SK-N-SH (cell line): ENCODE measurements at regions of chr6 and their contacts with region 1.

Region 1: DNA sequence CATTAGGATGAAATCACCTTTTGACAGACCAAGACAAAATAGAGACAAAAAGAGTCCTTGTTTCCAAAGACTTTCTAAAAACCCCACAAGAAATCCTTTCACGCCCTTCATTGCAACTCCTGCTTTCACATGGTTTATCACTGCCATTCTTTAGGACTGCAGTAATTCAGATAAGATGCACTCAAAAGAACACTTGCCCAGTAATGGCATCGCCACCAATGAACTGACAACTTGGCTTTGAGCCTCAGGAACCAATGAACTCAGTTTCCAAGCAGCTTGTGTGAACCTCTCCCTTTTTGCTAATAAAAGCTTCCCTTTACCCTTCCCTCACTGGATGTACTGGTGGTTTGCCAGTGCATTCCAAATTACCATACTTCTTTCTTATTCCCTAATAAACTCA is 21.8 kb downstream of the OSTM1 start:
- DNase-seq: no peak
- H3K4me3 ChIP-seq: no peak overlapping the region
- H3K27ac ChIP-seq: no peak overlapping the region
- H3K4me1 ChIP-seq: no peaks in the 10 kb centered on the region
- H3K27me3 ChIP-seq: no peaks in the 10 kb centered on the region
- CTCF ChIP-seq: no peak
- EP300 ChIP-seq: no peak
- RAD21 ChIP-seq: no peak

Region 2: DNA sequence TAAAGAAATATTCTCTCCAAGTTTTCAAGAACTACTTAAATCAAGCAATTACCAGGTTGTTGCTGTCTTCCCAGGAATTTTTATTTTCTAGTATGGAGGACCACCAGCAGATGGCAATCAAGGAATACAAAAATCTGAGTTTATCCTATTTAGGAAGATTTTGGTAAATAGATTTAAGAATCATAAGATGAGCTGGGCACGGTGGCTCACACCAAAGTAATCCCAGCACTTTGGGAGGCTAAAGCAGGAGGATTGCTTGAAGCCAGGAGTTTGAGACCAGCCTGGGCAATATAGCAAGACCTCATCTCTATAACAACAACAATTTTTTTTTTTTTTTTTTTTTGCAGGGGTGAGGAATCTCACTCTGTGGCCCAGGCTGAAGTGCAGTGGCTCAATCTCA is 75.4 kb before region 1 on chr6:
- CTCF ChIA-PET with region 1: interaction called, 111 read pairs
- POLR2A ChIA-PET with region 1: no interaction called
- DNase-seq: peak; percentile 42
- H3K4me3 ChIP-seq: no peak overlapping the region
- H3K27ac ChIP-seq: no peak overlapping the region
- H3K4me1 ChIP-seq: peaks cover 0 to 14% of the 10 kb centered on the region in 2 experiments; a peak in 2 of 4 replicates
- H3K27me3 ChIP-seq: no peaks in the 10 kb centered on the region
- CTCF ChIP-seq: peak; percentile 68
- EP300 ChIP-seq: no peak
- RAD21 ChIP-seq: peak; percentile 71

Region 3: GRCh38 chr6:107982486-107982885 is 70.2 kb before region 1 on chr6:
- CTCF ChIA-PET with region 1: interaction called, 111 read pairs
- POLR2A ChIA-PET with region 1: no interaction called
- DNase-seq: no peak
- H3K4me3 ChIP-seq: no peak overlapping the region
- H3K27ac ChIP-seq: no peak overlapping the region
- H3K4me1 ChIP-seq: peaks cover 0 to 10% of the 10 kb centered on the region in 2 experiments; a peak in 1 of 4 replicates
- H3K27me3 ChIP-seq: no peaks in the 10 kb centered on the region
- CTCF ChIP-seq: no peak
- EP300 ChIP-seq: no peak
- RAD21 ChIP-seq: no peak

Region 4: GRCh38 chr6:108039681-108040080 is 13.0 kb before region 1 on chr6:
- CTCF ChIA-PET with region 1: interaction called, 23 read pairs
- POLR2A ChIA-PET with region 1: no interaction called
- DNase-seq: no peak
- H3K4me3 ChIP-seq: no peak overlapping the region
- H3K27ac ChIP-seq: no peak overlapping the region
- H3K4me1 ChIP-seq: no peaks in the 10 kb centered on the region
- H3K27me3 ChIP-seq: no peaks in the 10 kb centered on the region
- CTCF ChIP-seq: no peak
- EP300 ChIP-seq: no peak
- RAD21 ChIP-seq: no peak

Region 5: DNA sequence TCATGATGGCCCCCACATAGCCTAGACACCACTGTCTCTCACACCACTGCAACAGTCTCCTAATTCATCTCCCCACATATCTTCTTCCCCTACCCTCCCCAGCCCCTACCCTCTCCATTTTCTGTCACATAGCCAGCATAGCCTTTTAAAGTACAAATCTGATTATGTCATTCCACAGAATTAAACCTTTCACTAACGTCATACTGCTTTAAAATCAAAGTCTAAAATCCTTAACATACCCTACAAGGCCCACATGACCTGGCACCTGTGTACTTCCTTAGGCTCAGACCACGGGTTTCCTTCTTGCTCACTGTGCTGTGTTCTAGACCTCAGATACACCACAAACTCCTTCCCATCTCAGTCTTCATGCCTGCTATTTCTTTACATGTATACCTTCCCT is 15.9 kb after region 1 on chr6:
- CTCF ChIA-PET with region 1: interaction called, 10 read pairs
- POLR2A ChIA-PET with region 1: no interaction called
- DNase-seq: no peak
- H3K4me3 ChIP-seq: no peak overlapping the region
- H3K27ac ChIP-seq: no peak overlapping the region
- H3K4me1 ChIP-seq: peaks cover 0 to 4% of the 10 kb centered on the region in 2 experiments; a peak in 2 of 4 replicates
- H3K27me3 ChIP-seq: no peaks in the 10 kb centered on the region
- CTCF ChIP-seq: no peak
- EP300 ChIP-seq: no peak
- RAD21 ChIP-seq: no peak